ENCODE measurements at regions of chr14 and their contacts with region 1.

Region 1: GRCh38 chr14:29518335-29518734 is 409.3 kb downstream of the PRKD1 start:
- DNase-seq: no peak
- H3K4me3 ChIP-seq: no peak overlapping the region
- CTCF ChIP-seq: peak; percentile 37

Region 2: GRCh38 chr14:29442696-29443095 is 75.6 kb before region 1 on chr14:
- in situ Hi-C with region 1: loop called (anchors 5 kb)
- DNase-seq: peak; percentile 13
- H3K4me3 ChIP-seq: no peak overlapping the region
- CTCF ChIP-seq: no peak

Region 3: DNA sequence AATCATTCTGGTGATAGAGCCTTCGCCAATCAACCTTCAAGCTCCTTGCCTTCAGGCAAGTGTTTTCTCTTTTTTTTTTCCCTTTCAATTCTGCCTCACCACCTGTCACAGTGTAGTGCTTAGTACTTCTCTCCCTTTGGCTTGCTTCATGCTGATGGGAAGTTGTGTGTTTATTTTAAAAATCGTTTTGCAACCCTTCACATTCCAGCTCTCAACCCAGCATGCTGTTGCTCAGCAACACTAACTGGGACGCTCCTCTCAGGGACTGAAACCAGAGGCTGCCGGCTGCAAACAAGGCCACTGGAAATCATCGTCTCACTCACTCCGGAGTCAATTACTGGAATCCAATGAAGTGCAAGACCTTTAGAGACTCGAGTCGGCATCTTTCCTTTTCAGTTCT is 66.7 kb after region 1 on chr14:
- in situ Hi-C with region 1: no loop called
- DNase-seq: peak; percentile 70
- H3K4me3 ChIP-seq: no peak overlapping the region
- CTCF ChIP-seq: no peak